Ovary (tissue), 10 donors: ENCODE measurements at regions of chr19 and their contacts with region 1.

Region 1: DNA sequence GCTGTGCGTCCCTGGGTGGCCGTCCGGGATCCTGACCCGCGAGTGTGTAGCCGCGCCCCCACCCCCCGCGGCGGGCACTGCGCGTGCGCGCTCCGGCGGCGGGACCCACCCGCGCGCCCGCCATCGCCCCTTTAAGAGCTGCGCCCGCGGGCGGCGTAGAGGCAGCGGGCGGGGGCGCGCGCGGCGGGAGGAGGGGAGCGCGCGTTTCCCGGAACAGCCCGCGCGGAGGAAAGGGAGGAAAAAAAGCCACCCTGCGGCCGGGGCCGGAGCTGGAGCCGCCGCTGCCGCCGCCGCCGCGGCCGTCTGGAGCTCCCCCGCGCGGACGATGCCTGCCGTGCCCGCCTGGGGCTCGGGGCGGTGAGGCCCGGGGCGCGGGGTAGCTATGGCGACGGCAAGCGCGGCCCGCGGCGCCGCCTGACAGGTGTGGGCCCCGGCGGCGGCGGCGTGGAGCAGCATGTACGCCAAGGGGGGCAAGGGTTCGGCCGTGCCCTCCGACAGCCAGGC is at the start of gene SSBP4:
- DNase-seq: peak; percentile 64 to 88 (median 80)
- H3K4me3 ChIP-seq: peak within 1 kb of the TSS; percentile 51
- H3K27ac ChIP-seq: peak within 1 kb of the TSS; percentile 62 to 77
- H3K4me1 ChIP-seq: peaks cover 22% of the 10 kb centered on the region
- H3K27me3 ChIP-seq: no peaks in the 10 kb centered on the region
- CTCF ChIP-seq: peak in 2 of 3 donors; percentile 65 to 81
- EP300 ChIP-seq: no peak
- POLR2A ChIP-seq: peak; percentile 67
- total RNA-seq, gene SSBP4: 58.9 to 124 (median 88.3) TPM

Region 2: DNA sequence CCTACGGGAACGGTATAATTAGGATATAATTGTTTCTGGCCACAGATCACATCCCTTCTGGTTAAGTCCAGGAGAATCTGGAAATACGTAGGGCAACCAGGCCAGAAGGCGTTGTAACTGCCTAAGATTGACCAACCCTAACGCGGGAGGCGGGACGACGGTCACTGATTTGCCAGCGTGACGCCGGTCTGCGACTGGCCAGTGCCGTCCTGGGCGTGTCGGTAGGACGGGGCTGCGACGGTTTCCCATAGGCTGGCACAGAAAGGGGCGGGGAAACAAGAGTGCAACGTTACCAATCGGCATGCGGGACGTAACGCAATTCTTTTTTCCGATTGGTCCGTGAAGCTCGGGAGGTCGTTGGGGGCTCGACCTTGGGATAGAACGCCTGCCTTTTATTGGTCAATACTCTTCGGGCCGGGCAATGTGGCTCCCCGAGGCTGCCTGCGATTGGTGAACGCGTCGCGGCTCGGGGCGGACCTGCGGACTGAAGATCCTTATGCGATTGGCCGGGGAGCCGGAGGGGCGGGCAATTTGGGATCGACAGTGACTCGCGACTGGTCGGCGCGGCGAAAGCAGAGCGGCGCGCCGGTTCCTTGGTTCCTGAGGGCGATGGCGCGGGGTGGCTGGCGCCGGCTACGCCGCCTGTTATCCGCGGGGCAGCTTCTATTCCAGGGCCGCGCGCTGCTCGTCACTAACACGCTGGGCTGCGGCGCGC is 226.4 kb before region 1 on chr19 and contains the start of gene MPV17L2:
- intact Hi-C with region 1: loop called in 1 of 4 experiments (anchors 10 kb)
- DNase-seq: peak; percentile 98 to 100 (median 99)
- H3K4me3 ChIP-seq: peak within 1 kb of the TSS; percentile 62
- H3K27ac ChIP-seq: peak within 1 kb of the TSS; percentile 81 to 95
- H3K4me1 ChIP-seq: peaks cover 6% of the 10 kb centered on the region
- H3K27me3 ChIP-seq: no peaks in the 10 kb centered on the region
- CTCF ChIP-seq: peak in 2 of 3 donors; percentile 2 to 23
- EP300 ChIP-seq: peak; percentile 37
- POLR2A ChIP-seq: peak; percentile 93
- total RNA-seq, gene MPV17L2: 6.9 to 15.2 (median 8.6) TPM

Region 3: DNA sequence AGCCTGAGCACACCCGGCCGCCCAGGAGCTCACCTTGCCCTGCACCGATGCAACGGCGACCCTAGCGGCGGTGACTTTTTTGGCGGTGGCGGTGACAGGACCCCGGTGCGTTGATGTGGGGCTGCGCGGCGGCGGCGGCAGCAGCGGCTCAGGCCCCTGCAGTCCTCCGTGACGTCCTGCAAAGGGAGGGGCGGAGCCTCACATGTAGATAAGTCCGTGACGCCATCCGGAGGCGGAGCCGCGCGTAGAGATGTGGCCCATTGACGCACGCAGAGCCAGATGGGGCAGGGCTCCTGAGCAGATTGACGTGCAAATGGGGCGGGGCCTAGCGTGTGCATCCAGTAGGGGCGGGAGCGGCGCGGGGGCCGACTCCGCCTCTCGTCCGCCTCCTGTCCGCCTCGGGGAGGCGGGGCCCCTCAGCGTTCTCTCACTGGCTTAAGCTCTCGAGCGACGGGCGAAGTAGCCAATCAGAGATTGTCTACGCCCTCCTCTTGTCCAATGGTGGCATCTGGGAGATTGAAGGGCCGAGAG is 215.3 kb before region 1 on chr19 and contains the start of gene RAB3A:
- intact Hi-C with region 1: loop called in 2 of 4 experiments (anchors 10 kb)
- DNase-seq: peak; percentile 100
- H3K4me3 ChIP-seq: peak within 1 kb of the TSS; percentile 68
- H3K27ac ChIP-seq: peak within 1 kb of the TSS; percentile 93 to 97
- H3K4me1 ChIP-seq: peaks cover 12% of the 10 kb centered on the region
- H3K27me3 ChIP-seq: no peaks in the 10 kb centered on the region
- CTCF ChIP-seq: peak in 1 of 3 donors; percentile 27
- EP300 ChIP-seq: peak; percentile 85
- POLR2A ChIP-seq: peak; percentile 56
- total RNA-seq, gene RAB3A: 1.9 to 32.9 (median 9.0) TPM

Region 4: GRCh38 chr19:18281082-18282020 is 137.9 kb before region 1 on chr19 and contains the start of gene JUND:
- intact Hi-C with region 1: loop called in 3 of 4 experiments (anchors 5 to 10 kb)
- DNase-seq: peak; percentile 98 to 99 (median 99)
- H3K4me3 ChIP-seq: peak within 1 kb of the TSS; percentile 93
- H3K27ac ChIP-seq: peak within 1 kb of the TSS; percentile 99 to 100
- H3K4me1 ChIP-seq: peaks cover 16% of the 10 kb centered on the region
- H3K27me3 ChIP-seq: no peaks in the 10 kb centered on the region
- CTCF ChIP-seq: peak in 1 of 3 donors; percentile 32
- EP300 ChIP-seq: peak; percentile 95
- POLR2A ChIP-seq: peak; percentile 97
- total RNA-seq, gene JUND: 163 to 1,260 (median 581) TPM

Region 5: GRCh38 chr19:18349524-18350128 is 69.6 kb before region 1 on chr19:
- intact Hi-C with region 1: loop called in 2 of 4 experiments (anchors 5 kb)
- DNase-seq: peak; percentile 56 to 78 (median 73)
- H3K4me3 ChIP-seq: no peak overlapping the region
- H3K27ac ChIP-seq: no peak overlapping the region
- H3K4me1 ChIP-seq: no peaks in the 10 kb centered on the region
- H3K27me3 ChIP-seq: no peaks in the 10 kb centered on the region
- CTCF ChIP-seq: peak; percentile 48 to 67 (median 64)
- EP300 ChIP-seq: no peak
- POLR2A ChIP-seq: no peak